Heart left ventricle (tissue), 16 donors: ENCODE measurements at regions of chr22 and their contacts with region 1.

Region 1: DNA sequence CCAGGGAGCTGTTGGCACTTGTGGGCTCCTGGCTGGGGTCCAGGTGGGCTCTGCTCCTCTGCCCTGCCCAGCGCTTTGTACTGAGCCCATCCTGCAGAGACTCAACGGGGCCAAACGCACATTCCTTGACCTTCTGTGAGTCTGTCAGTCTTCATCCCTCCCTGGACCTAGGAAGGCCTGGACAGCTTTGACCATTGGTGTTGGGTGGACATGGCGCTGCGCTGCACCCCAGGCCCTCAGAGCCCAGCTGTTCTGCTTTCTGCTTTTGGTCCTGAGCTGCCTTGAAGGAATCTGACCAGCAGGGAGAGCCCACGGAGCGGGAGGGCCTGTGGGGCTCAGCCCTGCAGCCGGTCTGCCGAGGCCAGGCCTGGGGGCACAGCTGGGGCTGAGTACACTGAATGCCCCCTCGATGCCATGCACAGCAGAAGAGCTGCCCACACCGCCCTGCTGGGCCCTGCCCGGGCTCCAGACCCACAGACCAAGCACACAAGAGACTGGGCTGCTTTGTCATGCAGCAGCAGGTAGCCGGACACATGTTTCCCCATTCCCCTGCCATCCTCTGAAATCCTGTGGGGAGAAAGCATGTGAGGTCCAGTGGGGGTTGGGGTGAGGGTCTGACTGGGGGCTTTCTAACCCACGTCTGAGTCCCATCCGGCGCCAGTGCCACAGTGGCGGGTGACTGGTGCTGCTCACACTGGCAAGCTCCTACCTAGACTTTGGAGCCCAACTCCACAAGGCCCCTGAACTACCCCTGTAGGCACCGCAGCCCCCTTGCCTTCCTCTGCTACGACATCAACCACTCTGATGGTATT is 24.1 kb upstream of the CCDC188 start:
- DNase-seq: no peak
- ATAC-seq: peak in 3 of 4 donors; percentile 13 to 38 (median 14)
- H3K4me3 ChIP-seq: no peak overlapping the region
- H3K27ac ChIP-seq: no peak overlapping the region
- H3K4me1 ChIP-seq: no peaks in the 10 kb centered on the region
- H3K27me3 ChIP-seq: no peaks in the 10 kb centered on the region
- CTCF ChIP-seq: peak in 8 of 12 donors; percentile 9 to 42 (median 18)
- POLR2A ChIP-seq: no peak

Region 2: DNA sequence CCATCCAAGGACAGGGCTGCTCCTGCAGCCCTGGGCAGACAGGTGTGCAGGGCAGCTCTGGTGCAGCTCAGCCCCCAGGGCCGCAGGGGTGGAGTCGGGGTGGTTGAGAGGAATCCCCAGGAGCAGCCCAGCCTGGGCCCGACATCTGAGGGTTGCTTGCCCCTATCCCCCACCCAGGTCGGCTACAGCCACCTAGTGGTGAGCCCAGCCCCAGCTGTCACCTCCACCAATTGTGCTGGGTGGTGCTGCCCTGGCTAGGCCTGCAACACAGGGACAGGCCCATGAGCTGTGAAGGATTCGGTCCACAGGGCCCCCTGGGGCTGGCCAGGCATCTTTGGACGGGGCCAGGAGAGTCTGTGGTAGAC is 63.5 kb after region 1 on chr22:
- intact Hi-C with region 1: loop called in 1 of 10 experiments (anchors 5 kb)
- DNase-seq: peak; percentile 45 to 80 (median 55)
- ATAC-seq: peak; percentile 49 to 75 (median 54)
- H3K4me3 ChIP-seq: peak overlapping the region in 3 of 12 donors; percentile 7 to 22 (median 18)
- H3K27ac ChIP-seq: peak overlapping the region; percentile 52 to 94 (median 83)
- H3K4me1 ChIP-seq: peaks cover 8 to 50% (median 43%) of the 10 kb centered on the region in 12 donors
- H3K27me3 ChIP-seq: no peaks in the 10 kb centered on the region
- CTCF ChIP-seq: peak; percentile 23 to 70 (median 56)
- POLR2A ChIP-seq: no peak